Endothelial cell of umbilical vein (primary cell): ENCODE measurements at regions of chrX and their contacts with region 1.

Region 1: GRCh38 chrX:55488593-55489313 is 895 bp downstream of the USP51 start:
- DNase-seq: peak; percentile 73
- H3K4me3 ChIP-seq: peak overlapping the region; percentile 22 to 70 (median 61)
- H3K27ac ChIP-seq: peak overlapping the region; percentile 54
- H3K4me1 ChIP-seq: peaks cover 2% of the 10 kb centered on the region
- H3K27me3 ChIP-seq: no peaks in the 10 kb centered on the region
- CTCF ChIP-seq: no peak
- POLR2A ChIP-seq: no peak

Region 2: DNA sequence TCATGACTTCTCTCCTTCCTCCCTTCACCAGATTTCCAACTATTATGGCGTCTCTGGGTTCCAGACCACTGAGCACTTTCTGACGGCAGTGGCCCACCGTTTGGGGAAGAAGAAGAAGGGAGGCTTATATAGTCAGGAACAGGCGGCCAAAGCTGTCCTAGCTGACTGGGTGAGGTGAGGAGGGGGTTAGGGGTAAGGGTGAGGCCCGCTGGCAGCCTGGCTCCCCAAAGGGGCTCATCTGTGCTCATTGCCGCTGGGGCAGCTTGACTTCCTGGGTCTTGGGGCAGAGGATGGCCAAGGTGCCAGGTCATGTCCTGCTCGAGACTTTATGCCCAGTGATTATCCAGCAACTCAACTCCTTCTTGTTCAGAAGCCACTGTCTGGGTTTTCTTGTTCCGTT is 937.0 kb before region 1 on chrX:
- CTCF ChIA-PET with region 1: no interaction called
- POLR2A ChIA-PET with region 1: no interaction called
- dilution Hi-C with region 1: no loop called
- intact Hi-C with region 1: no loop called
- DNase-seq: no peak
- H3K4me3 ChIP-seq: no peak overlapping the region
- H3K27ac ChIP-seq: no peak overlapping the region
- H3K4me1 ChIP-seq: no peaks in the 10 kb centered on the region
- H3K27me3 ChIP-seq: no peaks in the 10 kb centered on the region
- CTCF ChIP-seq: no peak
- POLR2A ChIP-seq: no peak

Region 3: DNA sequence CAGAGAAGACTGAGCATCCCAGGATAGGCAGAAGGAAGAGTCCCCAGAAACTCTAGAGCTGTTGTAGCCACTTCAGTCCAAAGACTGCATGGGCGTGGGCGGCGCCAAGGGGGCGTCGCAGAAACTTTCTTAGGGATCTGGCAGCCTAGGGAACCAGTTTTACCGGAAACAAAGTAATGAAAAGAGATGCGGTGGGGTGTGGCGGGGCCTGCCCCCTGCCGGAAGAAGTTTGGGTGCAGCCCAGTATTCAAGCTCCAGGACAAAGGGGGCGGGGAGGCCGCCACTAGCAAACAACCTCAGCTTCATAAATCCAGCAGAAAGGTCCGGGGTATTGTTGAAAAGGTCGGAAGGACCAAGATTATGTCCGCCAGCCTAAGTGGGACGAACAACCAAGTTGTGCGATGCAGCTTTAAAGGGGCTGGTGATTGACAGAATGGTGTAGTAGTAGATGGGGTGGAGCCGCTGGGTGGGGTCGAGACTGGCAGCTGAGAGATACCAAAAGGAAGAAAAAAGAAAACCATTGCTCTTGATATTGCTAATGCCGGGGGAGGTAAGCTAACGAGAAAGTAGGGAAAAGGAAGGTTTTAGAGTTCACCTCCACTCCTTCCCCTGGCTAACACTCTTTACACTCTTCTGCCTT is 419.3 kb after region 1 on chrX:
- CTCF ChIA-PET with region 1: interaction called, 10 read pairs
- POLR2A ChIA-PET with region 1: interaction called, 3 read pairs
- dilution Hi-C with region 1: no loop called
- intact Hi-C with region 1: no loop called
- DNase-seq: peak; percentile 6
- H3K4me3 ChIP-seq: peak overlapping the region; percentile 70 to 90 (median 86)
- H3K27ac ChIP-seq: peak overlapping the region; percentile 17
- H3K4me1 ChIP-seq: no peaks in the 10 kb centered on the region
- H3K27me3 ChIP-seq: no peaks in the 10 kb centered on the region
- CTCF ChIP-seq: peak; percentile 23 to 27
- POLR2A ChIP-seq: no peak